ENCODE measurements at regions of chr13 and their contacts with region 1.

Region 1: GRCh38 chr13:44796597-44797490 is 192.4 kb downstream of the NUFIP1 start:
- DNase-seq: no peak

Region 2: GRCh38 chr13:44537248-44537647 is 259.6 kb before region 1 on chr13:
- intact Hi-C with region 1: loop called in 1 of 2 experiments (anchors 5 kb)
- DNase-seq: no peak

Region 3: GRCh38 chr13:44768239-44768638 is 28.6 kb before region 1 on chr13:
- intact Hi-C with region 1: no loop called
- DNase-seq: no peak

Region 4: DNA sequence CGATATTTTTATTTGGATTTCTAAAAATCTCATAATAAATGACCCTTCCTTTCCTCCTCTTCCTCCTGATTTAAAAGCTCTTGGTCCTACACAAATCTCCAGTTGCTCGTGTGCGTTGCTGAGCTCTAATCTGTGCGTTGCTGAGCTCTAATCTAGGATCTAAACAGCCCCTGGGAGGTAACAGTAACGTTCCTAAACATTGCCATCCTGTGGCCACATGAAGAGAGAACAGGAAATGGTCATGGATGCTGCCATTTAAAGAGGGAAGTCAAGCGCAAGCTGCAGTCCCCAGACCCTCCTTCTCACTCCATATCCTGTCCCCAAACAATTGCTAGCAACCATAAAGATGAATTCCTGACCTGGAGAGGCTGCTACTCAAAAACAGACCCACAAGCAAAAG is 21.6 kb after region 1 on chr13:
- intact Hi-C with region 1: no loop called
- DNase-seq: no peak

Region 5: DNA sequence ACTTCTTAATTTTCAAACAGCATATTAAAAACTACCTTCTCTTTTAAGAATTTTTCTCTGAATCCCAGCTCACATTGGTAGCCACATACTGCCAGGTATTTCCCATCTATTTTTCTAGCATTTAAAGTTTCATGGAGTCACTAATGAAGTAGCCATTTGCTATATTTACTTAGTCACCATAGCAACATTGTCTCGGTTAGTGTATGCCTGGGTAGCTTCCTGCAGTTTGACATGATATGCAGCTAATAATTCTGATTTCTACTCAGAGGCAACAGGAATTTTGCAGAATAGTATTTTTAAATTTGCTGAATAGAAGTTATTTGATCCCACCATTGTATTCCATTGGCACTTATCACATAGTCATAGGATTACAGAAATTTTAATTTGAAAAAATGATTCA is 434.9 kb after region 1 on chr13:
- intact Hi-C with region 1: no loop called
- DNase-seq: no peak